Ascending aorta (tissue), 2 donors: ENCODE measurements at regions of chr12 and their contacts with region 1.

Region 1: GRCh38 chr12:28190321-28191050 is at the start of gene CCDC91:
- DNase-seq: peak; percentile 70 to 95
- H3K4me3 ChIP-seq: peak within 1 kb of the TSS; percentile 80 to 87
- H3K27ac ChIP-seq: peak within 1 kb of the TSS; percentile 96 to 100
- H3K4me1 ChIP-seq: peaks cover 0 to 5% of the 10 kb centered on the region in 2 donors
- H3K27me3 ChIP-seq: no peaks in the 10 kb centered on the region
- CTCF ChIP-seq: peak in 1 of 3 experiments; percentile 9
- total RNA-seq, gene CCDC91: 13.5 TPM

Region 2: DNA sequence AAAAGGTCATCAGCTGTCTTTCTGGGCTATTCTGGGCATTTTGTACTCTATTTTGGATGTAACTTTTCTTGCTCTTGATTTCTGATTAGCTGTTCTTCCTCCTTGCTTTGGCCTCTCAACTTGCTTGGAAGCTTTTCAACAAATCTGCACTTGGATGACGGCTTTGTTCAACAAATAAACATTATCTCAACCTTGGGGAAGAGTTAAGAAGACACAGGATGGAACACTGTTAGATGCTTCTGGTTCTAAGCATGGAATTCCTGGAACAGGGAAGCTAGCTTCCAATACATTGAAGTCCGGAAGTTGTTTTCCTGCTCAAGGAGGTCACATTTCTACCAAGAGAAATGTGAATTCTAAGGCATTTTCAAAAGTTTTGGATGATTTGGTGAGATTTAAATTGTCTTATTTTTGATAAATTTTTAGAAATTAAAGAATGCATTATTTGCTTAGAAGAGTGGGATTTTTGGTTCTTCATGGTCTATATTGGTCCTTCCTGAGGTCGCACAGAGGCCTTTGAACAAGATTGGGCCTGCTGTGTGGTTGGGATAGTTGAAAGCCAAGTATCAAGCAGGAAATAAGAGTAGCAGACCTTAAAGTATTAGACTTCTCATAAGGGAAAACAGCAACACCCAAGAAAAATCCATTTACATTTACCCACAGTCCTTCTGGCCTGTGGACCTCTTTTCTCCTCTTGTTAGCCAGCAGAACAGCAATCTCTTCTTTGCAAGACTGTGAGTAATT is 607.3 kb before region 1 on chr12:
- intact Hi-C with region 1: no loop called
- DNase-seq: no peak
- H3K4me3 ChIP-seq: no peak overlapping the region
- H3K27ac ChIP-seq: peak overlapping the region; percentile 36 to 38
- H3K4me1 ChIP-seq: peaks cover 0 to 11% of the 10 kb centered on the region in 2 donors
- H3K27me3 ChIP-seq: no peaks in the 10 kb centered on the region
- CTCF ChIP-seq: no peak

Region 3: DNA sequence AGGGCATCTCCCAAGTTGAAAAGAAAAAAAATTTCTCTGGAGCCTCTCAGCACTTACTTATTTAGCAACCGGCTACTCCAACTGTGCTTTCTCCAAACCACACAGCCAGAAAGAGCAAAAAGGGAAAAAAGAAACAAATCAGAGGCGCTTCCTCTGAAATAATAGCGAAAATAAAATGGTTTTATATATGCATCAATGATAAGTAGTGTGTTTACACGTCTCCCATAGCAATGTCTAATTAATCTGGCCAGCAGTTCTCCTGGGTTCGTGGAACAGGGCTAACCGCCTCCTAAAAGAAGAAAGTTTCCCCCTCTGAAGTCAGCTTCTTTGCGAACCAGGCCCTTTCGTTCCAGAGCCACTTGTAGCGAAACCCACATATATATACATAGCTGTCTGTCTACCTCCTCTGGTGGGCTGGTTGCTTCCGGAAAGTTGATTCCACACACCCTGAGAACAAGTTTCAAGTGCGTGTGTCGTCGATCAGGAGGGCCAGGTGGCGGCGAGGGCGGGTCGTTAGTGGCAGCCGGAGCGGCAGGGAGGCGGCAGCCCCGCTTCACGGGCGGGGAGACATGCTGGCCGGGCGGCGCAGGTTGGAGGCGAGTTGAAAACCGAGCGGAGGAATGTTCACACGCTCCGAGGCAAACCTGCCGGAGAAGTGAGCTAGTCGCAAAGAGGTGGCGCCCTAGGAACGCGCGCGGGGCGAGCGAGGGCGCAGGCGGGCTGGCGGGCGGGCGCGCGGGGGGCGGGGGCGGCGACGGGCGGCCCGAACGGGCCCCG is 220.7 kb before region 1 on chr12:
- intact Hi-C with region 1: loop called (anchors 5 kb)
- DNase-seq: peak in 1 of 2 donors; percentile 74
- H3K4me3 ChIP-seq: peak overlapping the region; percentile 64 to 81
- H3K27ac ChIP-seq: peak overlapping the region; percentile 62 to 81
- H3K4me1 ChIP-seq: peaks cover 0 to 20% of the 10 kb centered on the region in 2 donors
- H3K27me3 ChIP-seq: no peaks in the 10 kb centered on the region
- CTCF ChIP-seq: peak in 1 of 3 experiments; percentile 40

Region 4: GRCh38 chr12:28065889-28066630 is 124.4 kb before region 1 on chr12:
- intact Hi-C with region 1: loop called (anchors 2 kb)
- DNase-seq: no peak
- H3K4me3 ChIP-seq: peak overlapping the region in 1 of 2 donors; percentile 12
- H3K27ac ChIP-seq: peak overlapping the region; percentile 49 to 74
- H3K4me1 ChIP-seq: peaks cover 0 to 5% of the 10 kb centered on the region in 2 donors
- H3K27me3 ChIP-seq: no peaks in the 10 kb centered on the region
- CTCF ChIP-seq: no peak

Region 5: GRCh38 chr12:28130625-28131598 is 59.6 kb before region 1 on chr12:
- intact Hi-C with region 1: loop called (anchors 1 kb)
- DNase-seq: peak; percentile 45 to 91
- H3K4me3 ChIP-seq: no peak overlapping the region
- H3K27ac ChIP-seq: peak overlapping the region; percentile 79 to 87
- H3K4me1 ChIP-seq: peaks cover 0 to 10% of the 10 kb centered on the region in 2 donors
- H3K27me3 ChIP-seq: no peaks in the 10 kb centered on the region
- CTCF ChIP-seq: no peak

Region 6: GRCh38 chr12:28340261-28340660 is 149.8 kb after region 1 on chr12:
- intact Hi-C with region 1: no loop called
- DNase-seq: no peak
- H3K4me3 ChIP-seq: no peak overlapping the region
- H3K27ac ChIP-seq: no peak overlapping the region
- H3K4me1 ChIP-seq: no peaks in the 10 kb centered on the region
- H3K27me3 ChIP-seq: no peaks in the 10 kb centered on the region
- CTCF ChIP-seq: no peak